ENCODE measurements at regions of chr1 and their contacts with region 1.

Region 1: GRCh38 chr1:181504399-181504842 is 21.1 kb downstream of the CACNA1E start:
- DNase-seq: peak; percentile 72
- CTCF ChIP-seq: peak; percentile 52

Region 2: DNA sequence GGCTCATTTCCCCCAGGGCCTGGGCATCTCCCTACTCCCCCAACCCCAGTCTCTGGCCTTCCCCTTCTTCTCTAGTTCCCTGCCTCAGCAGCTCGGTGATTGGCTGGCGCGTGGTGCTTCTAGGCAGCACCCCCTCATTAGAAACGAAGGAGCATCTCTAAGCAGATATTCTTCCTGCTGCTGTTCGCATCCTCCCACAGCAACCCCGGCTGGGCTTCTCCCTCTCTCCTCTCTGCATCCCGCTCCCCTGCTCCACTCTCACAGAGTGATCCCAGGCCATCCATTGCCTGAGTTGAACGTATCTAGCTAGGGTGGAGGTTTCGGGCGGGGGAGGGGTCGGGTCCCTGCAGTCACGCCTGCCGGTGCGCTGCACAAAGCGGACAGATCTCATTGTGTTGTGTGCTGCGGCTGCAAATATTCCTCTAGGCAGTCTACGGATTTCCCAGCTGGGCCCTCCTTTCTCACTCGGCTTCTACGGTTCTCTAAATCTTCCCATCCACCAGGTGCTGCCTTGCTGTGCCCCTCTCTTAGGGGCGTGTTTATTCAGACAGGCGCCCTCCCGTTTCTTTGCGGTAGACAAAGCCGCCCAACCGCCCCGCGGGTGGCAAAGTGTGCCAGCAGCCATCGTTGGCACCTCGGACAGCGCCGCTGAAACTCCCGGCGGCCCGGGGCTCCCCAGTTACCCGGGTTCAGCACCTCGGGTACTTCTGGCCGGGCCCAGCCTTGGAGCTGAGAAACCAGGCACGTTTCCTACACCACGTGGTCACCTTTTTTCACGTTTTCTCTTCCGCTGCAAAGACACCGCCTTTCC is 18.9 kb before region 1 on chr1:
- CTCF ChIA-PET with region 1: interaction called, 213 read pairs
- POLR2A ChIA-PET with region 1: no interaction called
- DNase-seq: peak; percentile 79
- CTCF ChIP-seq: no peak

Region 3: DNA sequence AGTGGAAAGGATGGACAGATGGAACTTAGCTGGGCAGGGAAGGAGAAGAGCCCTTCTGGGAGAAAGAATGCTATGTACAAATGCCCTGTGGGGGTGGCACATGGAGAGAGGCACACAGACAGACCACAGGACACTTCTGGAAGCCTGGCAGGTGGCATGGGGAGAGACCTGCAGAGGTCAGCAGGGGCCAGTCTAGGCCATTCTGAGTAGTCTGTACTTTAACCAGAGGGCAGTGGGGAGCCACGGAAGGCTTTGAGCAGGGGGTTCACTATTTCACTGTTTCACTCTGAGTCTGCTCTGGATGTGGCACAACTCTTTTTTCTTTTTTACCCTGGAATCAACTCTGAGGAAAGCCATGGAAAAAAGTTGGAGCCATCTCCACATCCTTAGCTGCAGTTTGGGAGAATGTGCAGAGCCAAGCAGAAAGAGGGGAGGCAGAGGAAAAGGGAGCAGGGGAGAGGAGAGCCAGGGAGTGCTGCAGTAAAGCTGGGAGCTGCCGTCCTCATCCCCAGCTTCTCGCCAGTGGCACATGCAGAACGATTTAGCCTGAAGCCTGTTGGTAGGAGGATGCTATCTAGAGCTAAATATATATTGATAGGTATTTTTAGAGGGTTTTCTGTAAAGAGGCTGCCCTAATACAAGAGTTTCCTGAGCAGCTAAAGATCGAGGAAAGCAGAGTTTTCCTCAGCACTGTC is 12.9 kb after region 1 on chr1:
- CTCF ChIA-PET with region 1: interaction called, 22 read pairs
- POLR2A ChIA-PET with region 1: no interaction called
- DNase-seq: no peak
- CTCF ChIP-seq: no peak

Region 4: GRCh38 chr1:181531951-181532600 is 27.7 kb after region 1 on chr1:
- CTCF ChIA-PET with region 1: interaction called, 11 read pairs
- POLR2A ChIA-PET with region 1: no interaction called
- DNase-seq: no peak
- CTCF ChIP-seq: no peak

Measured in GM10248 (cell line).